Calu3 (cell line): ENCODE measurements at regions of chr12 and their contacts with region 1.

Region 1: DNA sequence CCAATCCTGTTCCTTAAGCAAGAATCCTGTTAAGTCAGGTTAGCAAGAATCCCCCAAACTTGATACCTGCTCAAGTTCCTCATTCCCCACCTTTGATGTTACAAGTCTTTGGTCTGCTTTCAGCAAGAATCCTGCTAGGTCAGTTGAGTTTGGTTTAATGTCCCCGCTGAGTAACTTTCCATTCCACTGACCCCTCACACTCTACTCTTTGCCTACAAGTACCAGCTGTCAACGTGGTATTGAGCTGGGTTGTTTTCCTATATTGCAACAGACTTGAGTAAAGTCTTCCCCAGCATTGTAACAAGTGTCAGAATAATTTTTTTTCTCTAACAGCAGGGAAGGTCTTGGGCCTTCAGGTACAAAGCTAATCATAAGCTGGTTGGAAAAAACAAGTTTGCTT is 6.3 kb downstream of the PPM1H start:
- DNase-seq: peak; percentile 22
- H3K4me3 Mint-ChIP-seq: no peak overlapping the region
- H3K27ac Mint-ChIP-seq: no peak overlapping the region
- H3K4me1 Mint-ChIP-seq: peaks cover 50% of the 10 kb centered on the region
- H3K27me3 Mint-ChIP-seq: no peaks in the 10 kb centered on the region
- CTCF ChIP-seq: no peak

Region 2: DNA sequence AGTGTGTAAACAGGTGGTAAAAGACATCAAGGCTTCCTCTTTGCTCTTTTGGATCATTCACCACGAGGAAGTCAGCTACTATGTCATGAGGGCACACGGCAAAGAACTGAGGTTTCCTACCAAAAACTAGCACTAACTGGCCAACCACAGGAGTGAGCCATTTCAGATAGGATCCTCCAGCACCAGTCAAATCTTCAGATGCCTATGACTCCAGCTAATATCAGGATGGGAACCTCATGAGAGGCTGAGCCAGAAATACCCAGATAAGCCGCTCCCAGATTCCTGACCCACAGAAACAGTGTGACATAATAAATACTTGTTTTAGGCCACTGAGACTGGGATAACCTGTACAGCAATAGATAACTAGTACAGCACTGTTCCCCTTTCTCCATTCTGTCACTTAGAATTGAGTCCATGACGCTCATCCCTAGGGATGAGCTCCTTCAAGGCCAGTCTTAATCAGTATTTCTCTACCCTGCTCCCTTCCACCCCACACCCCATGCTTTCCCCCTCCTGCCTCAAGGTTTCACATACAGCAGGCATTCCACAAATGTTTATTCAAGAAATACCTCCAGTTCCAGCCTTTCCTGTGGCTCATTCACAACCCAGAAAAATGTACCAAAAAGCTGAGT is 62.1 kb before region 1 on chr12:
- CTCF ChIA-PET with region 1: no interaction called
- intact Hi-C with region 1: no loop called
- DNase-seq: peak; percentile 59
- H3K4me3 Mint-ChIP-seq: peak overlapping the region; percentile 22
- H3K27ac Mint-ChIP-seq: peak overlapping the region; percentile 57
- H3K4me1 Mint-ChIP-seq: peaks cover 61% of the 10 kb centered on the region
- H3K27me3 Mint-ChIP-seq: no peaks in the 10 kb centered on the region
- CTCF ChIP-seq: no peak

Region 3: DNA sequence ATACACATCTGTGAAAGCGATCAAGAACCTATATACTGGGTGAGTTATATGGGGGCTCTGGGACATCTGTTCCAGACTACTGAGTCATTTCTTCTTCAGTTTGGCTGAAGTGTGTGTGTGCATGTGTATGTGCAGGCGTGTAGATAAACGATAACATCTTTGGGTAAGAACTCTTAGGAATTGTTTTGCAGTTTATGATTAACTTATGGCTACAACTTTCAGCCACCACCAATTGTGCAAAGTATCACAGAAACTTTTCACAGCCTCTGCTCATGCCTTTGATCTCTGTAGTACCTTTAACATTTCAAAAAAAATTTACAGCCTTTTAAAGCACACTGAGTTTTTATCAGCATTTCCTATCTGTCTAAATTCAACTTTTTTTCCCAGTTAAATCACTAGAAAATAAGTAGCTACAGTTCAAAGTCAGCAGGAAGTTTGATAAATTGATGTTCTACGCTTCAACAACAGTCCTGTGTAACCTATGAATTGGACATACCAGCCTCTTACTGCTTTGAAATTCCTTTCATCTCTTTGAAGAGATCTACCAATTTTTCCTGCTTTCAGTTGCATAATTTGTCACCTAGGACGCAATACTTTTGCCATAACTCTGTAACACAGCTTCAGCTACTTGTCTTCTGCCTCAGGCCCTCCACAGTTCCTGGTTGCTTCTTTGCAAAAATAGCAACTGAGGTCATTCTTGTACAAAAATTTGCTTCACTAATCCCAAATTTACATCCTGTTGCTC is 36.7 kb before region 1 on chr12:
- CTCF ChIA-PET with region 1: no interaction called
- intact Hi-C with region 1: loop called (anchors 5 kb)
- DNase-seq: no peak
- H3K4me3 Mint-ChIP-seq: peak overlapping the region; percentile 13
- H3K27ac Mint-ChIP-seq: no peak overlapping the region
- H3K4me1 Mint-ChIP-seq: peaks cover 25% of the 10 kb centered on the region
- H3K27me3 Mint-ChIP-seq: no peaks in the 10 kb centered on the region
- CTCF ChIP-seq: no peak